ENCODE measurements at regions of chr12 and their contacts with region 1.

Region 1: DNA sequence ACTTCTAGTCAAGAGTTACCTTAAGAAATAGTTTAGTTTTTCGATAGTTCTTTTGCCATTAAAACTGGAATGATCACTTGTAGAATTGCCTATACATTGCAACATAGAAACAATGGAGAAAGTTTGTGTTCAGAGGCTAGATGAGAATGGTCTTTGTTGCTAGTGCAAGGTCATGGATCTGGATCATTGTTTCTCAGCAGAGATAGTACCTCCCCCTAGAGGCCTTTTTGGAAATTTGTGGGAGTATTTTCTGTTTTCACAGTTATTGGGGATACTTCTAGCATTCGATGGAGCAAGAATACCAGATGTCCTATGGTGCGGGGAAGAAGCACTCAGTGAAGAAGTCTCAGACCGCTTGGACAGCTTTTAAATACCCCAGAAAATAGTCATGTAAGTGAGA is 138.8 kb upstream of the HMGA2 start:
- DNase-seq: no peak
- ATAC-seq: peak in 1 of 4 donors; percentile 24
- H3K4me3 ChIP-seq: no peak overlapping the region
- H3K27ac ChIP-seq: no peak overlapping the region
- H3K4me1 ChIP-seq: no peaks in the 10 kb centered on the region
- H3K27me3 ChIP-seq: no peaks in the 10 kb centered on the region
- CTCF ChIP-seq: peak; percentile 18 to 56 (median 44)
- POLR2A ChIP-seq: no peak

Region 2: GRCh38 chr12:65306366-65307168 is 378.9 kb before region 1 on chr12:
- intact Hi-C with region 1: loop called in 1 of 10 experiments (anchors 10 kb)
- DNase-seq: peak; percentile 63 to 80 (median 75)
- ATAC-seq: peak; percentile 86 to 95 (median 94)
- H3K4me3 ChIP-seq: no peak overlapping the region
- H3K27ac ChIP-seq: peak overlapping the region in 9 of 12 donors; percentile 3 to 61 (median 22)
- H3K4me1 ChIP-seq: peaks cover 0 to 62% (median 43%) of the 10 kb centered on the region in 12 donors
- H3K27me3 ChIP-seq: no peaks in the 10 kb centered on the region
- CTCF ChIP-seq: peak; percentile 26 to 59 (median 46)
- POLR2A ChIP-seq: no peak

Region 3: GRCh38 chr12:65565601-65566560 is 119.6 kb before region 1 on chr12:
- intact Hi-C with region 1: loop called in 1 of 10 experiments (anchors 10 kb)
- DNase-seq: no peak
- ATAC-seq: peak; percentile 20 to 75 (median 43)
- H3K4me3 ChIP-seq: no peak overlapping the region
- H3K27ac ChIP-seq: peak overlapping the region in 4 of 12 donors; percentile 6 to 63 (median 48)
- H3K4me1 ChIP-seq: peaks cover 0 to 26% (median 12%) of the 10 kb centered on the region in 12 donors
- H3K27me3 ChIP-seq: no peaks in the 10 kb centered on the region
- CTCF ChIP-seq: no peak
- POLR2A ChIP-seq: no peak

Region 4: DNA sequence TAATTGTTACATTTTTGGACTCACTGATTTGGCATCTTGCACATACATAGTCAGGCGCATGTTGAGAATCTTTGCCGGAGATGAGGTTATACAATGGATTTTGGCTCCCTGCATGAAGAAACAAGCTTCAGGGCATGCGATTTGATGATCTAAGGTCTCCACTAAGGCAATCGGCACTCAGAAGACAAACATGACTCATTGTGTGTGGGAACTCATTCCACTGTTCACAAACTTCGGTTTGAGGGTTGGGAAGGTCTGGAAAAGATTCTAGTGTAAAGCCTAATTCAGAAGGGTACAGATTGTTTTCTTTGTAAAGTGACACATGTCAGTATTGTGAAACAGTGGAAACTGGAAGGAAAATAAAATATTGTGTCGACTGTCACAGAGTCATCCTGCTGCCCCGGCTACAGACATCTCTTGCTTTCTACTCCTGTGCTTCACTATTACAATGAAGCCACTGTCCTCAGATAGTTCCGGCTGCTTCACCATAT is 53.8 kb before region 1 on chr12:
- intact Hi-C with region 1: no loop called
- DNase-seq: peak in 1 of 5 donors; percentile 15
- ATAC-seq: peak; percentile 74 to 92 (median 83)
- H3K4me3 ChIP-seq: no peak overlapping the region
- H3K27ac ChIP-seq: peak overlapping the region in 9 of 12 donors; percentile 15 to 68 (median 42)
- H3K4me1 ChIP-seq: no peaks in the 10 kb centered on the region
- H3K27me3 ChIP-seq: no peaks in the 10 kb centered on the region
- CTCF ChIP-seq: no peak
- POLR2A ChIP-seq: no peak

Measured in heart left ventricle (tissue), 16 donors.